IMR-90 (cell line): ENCODE measurements at regions of chr18 and their contacts with region 1.

Region 1: DNA sequence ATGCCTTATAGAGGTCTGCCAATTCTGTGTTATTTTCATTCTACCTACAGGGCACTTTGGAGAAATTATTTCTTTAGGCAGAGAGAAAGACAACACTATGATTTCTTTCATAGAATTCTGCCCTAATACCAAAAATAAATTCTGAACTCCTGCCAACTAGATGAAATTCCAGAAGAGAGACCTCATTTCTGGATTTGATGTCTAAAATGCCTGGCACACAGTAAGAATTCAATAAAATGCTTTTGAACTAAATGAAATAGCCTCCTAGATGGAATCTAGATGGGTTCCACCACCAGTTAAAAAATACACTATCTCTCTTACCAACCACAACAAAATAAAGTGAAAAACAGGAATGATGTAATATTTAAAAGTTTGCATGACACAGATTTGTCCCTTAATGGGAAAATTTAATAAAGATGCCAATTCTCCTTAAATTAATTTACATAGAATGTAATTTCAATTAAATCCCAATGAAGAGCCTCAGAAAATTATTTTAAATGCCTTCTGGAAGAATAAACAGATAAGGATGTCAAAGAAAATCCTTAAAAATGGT is 75.0 kb downstream of the OSBPL1A start:
- DNase-seq: peak; percentile 58
- ATAC-seq: peak; percentile 63
- H3K4me3 ChIP-seq: no peak overlapping the region
- H3K27ac ChIP-seq: no peak overlapping the region
- H3K4me1 ChIP-seq: no peaks in the 10 kb centered on the region
- H3K27me3 ChIP-seq: no peaks in the 10 kb centered on the region
- CTCF ChIP-seq: no peak
- POLR2A ChIP-seq: no peak
- RAD21 ChIP-seq: no peak

Region 2: GRCh38 chr18:24271381-24272331 is 51.0 kb before region 1 on chr18:
- CTCF ChIA-PET with region 1: no interaction called
- POLR2A ChIA-PET with region 1: no interaction called
- dilution Hi-C with region 1: no loop called
- in situ Hi-C with region 1: no loop called
- intact Hi-C with region 1: loop called (anchors 5 kb)
- DNase-seq: peak; percentile 72
- ATAC-seq: peak; percentile 84
- H3K4me3 ChIP-seq: peak overlapping the region; percentile 92
- H3K27ac ChIP-seq: peak overlapping the region; percentile 74
- H3K4me1 ChIP-seq: peaks cover 8% of the 10 kb centered on the region; the same call in 1 of the 2 replicates
- H3K27me3 ChIP-seq: no peaks in the 10 kb centered on the region
- CTCF ChIP-seq: peak; percentile 23; the same call in 1 of the 2 replicates
- POLR2A ChIP-seq: no peak
- RAD21 ChIP-seq: peak; percentile 18; the same call in 1 of the 2 replicates

Region 3: DNA sequence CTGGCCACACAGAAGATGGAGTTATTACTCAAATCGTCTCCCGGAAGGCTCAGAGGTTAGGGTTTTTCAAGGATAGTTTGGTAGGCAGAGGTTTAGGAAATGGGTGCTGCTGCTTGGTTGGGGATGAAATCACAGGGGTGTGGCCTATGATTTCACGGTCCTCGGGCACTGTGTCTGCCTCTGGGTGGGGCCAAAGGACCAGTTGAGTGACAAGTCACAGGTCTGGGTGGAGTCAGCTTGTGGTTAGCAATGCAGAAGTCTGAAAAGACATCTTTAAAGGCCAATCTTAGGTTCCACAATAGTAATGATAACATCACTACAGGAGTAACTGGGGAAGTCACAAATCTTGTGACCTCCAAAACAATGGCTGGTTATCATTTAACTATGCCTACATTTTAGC is 641.6 kb after region 1 on chr18:
- CTCF ChIA-PET with region 1: no interaction called
- POLR2A ChIA-PET with region 1: no interaction called
- dilution Hi-C with region 1: no loop called
- in situ Hi-C with region 1: no loop called
- intact Hi-C with region 1: no loop called
- DNase-seq: no peak
- ATAC-seq: peak; percentile 54
- H3K4me3 ChIP-seq: no peak overlapping the region
- H3K27ac ChIP-seq: peak overlapping the region; percentile 69; the same call in 1 of the 2 replicates
- H3K4me1 ChIP-seq: peaks cover 5% of the 10 kb centered on the region; the same call in 1 of the 2 replicates
- H3K27me3 ChIP-seq: peaks cover 15% of the 10 kb centered on the region
- CTCF ChIP-seq: no peak
- POLR2A ChIP-seq: no peak
- RAD21 ChIP-seq: no peak